Dorsolateral prefrontal cortex (tissue), 120 donors: ENCODE measurements at regions of chr11 and their contacts with region 1.

Region 1: DNA sequence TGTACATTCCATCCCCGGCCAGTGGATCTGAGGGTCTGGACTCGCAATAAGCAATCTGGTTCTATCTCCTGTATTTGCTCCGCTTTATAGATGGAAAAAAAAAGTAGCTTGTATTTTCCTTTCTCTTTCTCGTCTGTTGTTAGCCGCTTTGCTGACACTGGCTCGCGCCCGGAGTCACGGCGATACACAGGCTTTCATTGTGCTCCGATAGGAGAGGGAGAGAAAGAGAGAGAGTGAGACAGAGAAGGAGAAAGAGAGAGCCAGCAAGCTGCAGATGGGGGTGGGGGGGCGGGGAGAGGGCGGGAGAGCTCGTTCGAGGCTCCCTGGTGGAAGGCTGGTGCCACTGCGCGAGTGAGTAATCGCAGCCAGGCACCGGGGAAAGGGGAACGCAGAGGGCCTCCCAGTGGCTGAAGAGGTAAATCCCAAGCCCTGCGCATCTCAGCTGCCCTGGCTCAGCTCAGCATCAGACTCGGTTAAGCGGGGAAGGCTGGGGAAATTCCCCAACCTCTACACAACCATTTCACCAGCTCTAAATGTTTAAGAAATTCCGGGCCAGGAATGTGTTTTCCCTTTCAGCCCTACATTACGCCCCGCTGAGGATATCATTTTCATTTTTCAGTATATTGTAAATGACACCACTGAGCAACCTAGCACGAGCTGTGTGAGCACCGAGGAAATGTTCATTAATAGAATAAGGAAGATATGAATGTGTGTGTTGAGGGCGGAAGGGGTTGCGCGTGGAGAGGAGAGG is at the start of gene MAML2:
- DNase-seq: peak; percentile 83 to 95 (median 94)
- H3K4me3 ChIP-seq: peak within 1 kb of the TSS; percentile 37 to 91 (median 75)
- H3K27ac ChIP-seq: peak within 1 kb of the TSS in 57 of 59 donors; percentile 13 to 94 (median 85)
- H3K27me3 ChIP-seq: no peaks in the 10 kb centered on the region
- CTCF ChIP-seq: peak; percentile 85 to 99 (median 98)
- total RNA-seq, gene MAML2: 4.9 to 21.8 (median 10.2) TPM

Region 2: DNA sequence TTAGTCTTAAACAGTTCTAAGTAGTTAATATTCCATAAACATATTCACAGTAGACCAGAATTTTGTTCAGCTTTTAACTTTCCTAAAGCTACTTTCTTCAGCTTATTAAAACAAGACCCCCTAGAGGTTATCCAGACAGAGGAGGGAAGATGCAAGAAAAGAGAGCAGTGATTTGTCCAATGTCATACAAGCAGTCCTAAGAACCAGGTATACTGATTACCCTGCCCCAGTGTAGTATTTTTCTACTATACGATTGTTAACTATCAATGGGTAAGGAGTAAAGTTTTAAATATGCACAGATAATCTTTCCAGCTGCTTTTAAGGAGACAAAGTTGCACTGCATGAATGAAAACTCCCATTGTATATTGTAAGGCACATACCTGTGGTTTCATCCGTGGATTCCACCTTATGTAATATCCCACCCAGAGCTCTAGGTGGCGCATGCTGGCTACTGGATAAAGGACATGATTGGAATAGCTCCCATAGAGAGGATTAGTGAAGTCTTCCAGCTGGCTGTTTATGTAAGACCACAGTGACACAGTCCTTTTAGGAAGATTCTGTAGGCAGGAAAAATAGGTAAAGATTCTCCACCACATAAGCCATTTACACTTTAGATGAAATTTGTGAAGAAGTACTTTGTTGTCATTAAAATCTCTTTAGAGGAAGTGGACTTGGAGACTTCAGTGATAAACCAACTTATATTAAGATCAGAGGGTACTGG is 507.2 kb before region 1 on chr11:
- intact Hi-C with region 1: loop called in 1 of 2 experiments (anchors 5 kb)
- DNase-seq: peak in 7 of 10 donors; percentile 42 to 77 (median 50)
- H3K4me3 ChIP-seq: no peak overlapping the region
- H3K27ac ChIP-seq: peak overlapping the region in 52 of 59 donors; percentile 6 to 82 (median 58)
- H3K27me3 ChIP-seq: no peaks in the 10 kb centered on the region
- CTCF ChIP-seq: peak; percentile 67 to 96 (median 85)

Region 3: GRCh38 chr11:95923728-95924413 is 419.3 kb before region 1 on chr11 and contains the start of gene MTMR2:
- intact Hi-C with region 1: loop called in 1 of 2 experiments (anchors 5 kb)
- DNase-seq: peak; percentile 70 to 91 (median 80)
- H3K4me3 ChIP-seq: peak within 1 kb of the TSS; percentile 55 to 99 (median 86)
- H3K27ac ChIP-seq: peak within 1 kb of the TSS; percentile 87 to 99 (median 97)
- H3K27me3 ChIP-seq: no peaks in the 10 kb centered on the region
- CTCF ChIP-seq: peak in 21 of 56 donors; percentile 5 to 51 (median 25)
- total RNA-seq, gene MTMR2: 30.2 to 76.1 (median 44.7) TPM

Region 4: DNA sequence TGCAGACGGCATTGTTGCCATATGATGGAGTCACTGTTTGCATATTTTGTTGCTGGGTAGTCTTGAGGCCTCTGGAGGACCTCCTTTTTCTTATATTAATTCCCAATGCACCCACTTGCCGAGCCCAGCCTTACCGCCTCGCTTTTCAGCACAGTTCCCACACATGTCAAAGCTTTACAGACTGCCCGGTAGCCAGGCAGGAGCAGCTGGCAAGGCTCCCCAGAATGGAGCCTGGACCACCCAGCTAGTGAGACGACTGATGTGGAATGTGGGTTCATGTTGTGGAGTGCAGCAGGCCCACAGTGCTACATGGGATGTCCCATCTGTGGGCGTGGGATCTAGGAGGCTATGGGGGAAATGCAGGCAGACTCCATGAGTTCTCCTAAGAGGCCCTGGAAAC is 319.9 kb before region 1 on chr11:
- intact Hi-C with region 1: no loop called
- DNase-seq: no peak
- H3K4me3 ChIP-seq: no peak overlapping the region
- H3K27ac ChIP-seq: no peak overlapping the region
- H3K27me3 ChIP-seq: no peaks in the 10 kb centered on the region
- CTCF ChIP-seq: no peak

Region 5: GRCh38 chr11:96054870-96055705 is 288.0 kb before region 1 on chr11:
- intact Hi-C with region 1: loop called (anchors 2 kb)
- DNase-seq: no peak
- H3K4me3 ChIP-seq: no peak overlapping the region
- H3K27ac ChIP-seq: peak overlapping the region in 2 of 59 donors; percentile 6 to 11
- H3K27me3 ChIP-seq: no peaks in the 10 kb centered on the region
- CTCF ChIP-seq: peak; percentile 58 to 87 (median 75)

Region 6: GRCh38 chr11:96267496-96268032 is 75.6 kb before region 1 on chr11:
- intact Hi-C with region 1: loop called in 1 of 2 experiments (anchors 10 kb)
- DNase-seq: no peak
- H3K4me3 ChIP-seq: peak overlapping the region in 1 of 59 donors; percentile 3
- H3K27ac ChIP-seq: peak overlapping the region in 8 of 59 donors; percentile 1 to 31 (median 20)
- H3K27me3 ChIP-seq: no peaks in the 10 kb centered on the region
- CTCF ChIP-seq: no peak

Region 7: DNA sequence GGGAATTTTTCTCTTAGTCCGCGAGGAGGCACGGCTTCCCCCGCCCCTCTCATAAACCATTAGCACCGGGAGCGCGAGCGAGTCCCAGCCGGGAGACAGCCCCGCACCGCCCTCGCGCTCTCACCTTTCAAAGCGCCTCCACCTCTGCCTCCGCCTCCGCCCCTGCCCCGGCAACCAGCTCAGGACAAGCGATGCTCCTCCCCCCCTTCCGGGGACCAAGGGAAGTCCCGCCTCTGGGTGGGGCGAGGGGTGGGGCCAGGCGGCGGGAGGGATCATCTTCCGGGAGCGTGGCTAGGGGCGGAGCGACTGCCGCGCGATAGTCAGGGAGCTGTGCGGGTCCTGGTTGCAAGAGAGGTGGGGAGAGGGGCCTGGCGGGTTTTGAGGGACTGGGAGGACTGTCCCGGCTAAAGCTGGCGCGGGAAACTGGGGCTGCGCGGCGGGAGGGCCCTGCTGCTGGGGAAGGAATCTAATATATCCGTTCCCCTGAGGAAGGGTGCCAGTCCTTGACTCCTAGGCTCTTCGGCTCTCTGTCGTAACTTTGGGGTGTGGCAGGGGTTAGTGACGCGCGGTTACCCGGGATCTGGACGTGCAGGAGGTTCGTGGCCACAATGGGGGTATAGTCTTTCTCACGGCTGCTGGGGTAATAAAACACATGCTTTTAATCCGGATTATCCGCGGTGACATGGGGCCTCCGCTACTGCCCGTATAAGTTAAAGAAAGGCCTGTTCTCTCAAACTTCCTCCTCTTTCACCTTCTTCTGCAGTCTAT is 46.8 kb after region 1 on chr11 and contains the starts of genes CCDC82 and JRKL:
- intact Hi-C with region 1: loop called in 1 of 2 experiments (anchors 5 kb)
- DNase-seq: peak; percentile 90 to 98 (median 94)
- H3K4me3 ChIP-seq: peak within 1 kb of the TSS; percentile 72 to 99 (median 94)
- H3K27ac ChIP-seq: peak within 1 kb of the TSS in 57 of 59 donors; percentile 3 to 95 (median 73)
- H3K27me3 ChIP-seq: no peaks in the 10 kb centered on the region
- CTCF ChIP-seq: peak in 36 of 56 donors; percentile 7 to 51 (median 28)
- total RNA-seq, gene CCDC82: 39.5 to 85.8 (median 56.7) TPM
- total RNA-seq, gene JRKL: 5.2 to 11.8 (median 9.0) TPM

Region 8: GRCh38 chr11:96424693-96425092 is 81.6 kb after region 1 on chr11:
- intact Hi-C with region 1: no loop called
- DNase-seq: no peak
- H3K4me3 ChIP-seq: no peak overlapping the region
- H3K27ac ChIP-seq: no peak overlapping the region
- H3K27me3 ChIP-seq: no peaks in the 10 kb centered on the region
- CTCF ChIP-seq: no peak